Activated CD4-positive, alpha-beta memory T cell treated with anti-CD3 and anti-CD28 coated beads, Interleukin-2, amount 10 ng/mL, durations not matched to agents 7 days and 5 days (primary cell): ENCODE measurements at regions of chr17 and their contacts with region 1.

Region 1: GRCh38 chr17:80780381-80781198 is 211.1 kb upstream of the CHMP6 start:
- DNase-seq: peak; percentile 75
- H3K4me3 Mint-ChIP-seq: peak overlapping the region; percentile 54
- H3K27ac Mint-ChIP-seq: peak overlapping the region; percentile 95
- H3K4me1 Mint-ChIP-seq: peaks cover 83% of the 10 kb centered on the region
- H3K27me3 Mint-ChIP-seq: no peaks in the 10 kb centered on the region

Region 2: DNA sequence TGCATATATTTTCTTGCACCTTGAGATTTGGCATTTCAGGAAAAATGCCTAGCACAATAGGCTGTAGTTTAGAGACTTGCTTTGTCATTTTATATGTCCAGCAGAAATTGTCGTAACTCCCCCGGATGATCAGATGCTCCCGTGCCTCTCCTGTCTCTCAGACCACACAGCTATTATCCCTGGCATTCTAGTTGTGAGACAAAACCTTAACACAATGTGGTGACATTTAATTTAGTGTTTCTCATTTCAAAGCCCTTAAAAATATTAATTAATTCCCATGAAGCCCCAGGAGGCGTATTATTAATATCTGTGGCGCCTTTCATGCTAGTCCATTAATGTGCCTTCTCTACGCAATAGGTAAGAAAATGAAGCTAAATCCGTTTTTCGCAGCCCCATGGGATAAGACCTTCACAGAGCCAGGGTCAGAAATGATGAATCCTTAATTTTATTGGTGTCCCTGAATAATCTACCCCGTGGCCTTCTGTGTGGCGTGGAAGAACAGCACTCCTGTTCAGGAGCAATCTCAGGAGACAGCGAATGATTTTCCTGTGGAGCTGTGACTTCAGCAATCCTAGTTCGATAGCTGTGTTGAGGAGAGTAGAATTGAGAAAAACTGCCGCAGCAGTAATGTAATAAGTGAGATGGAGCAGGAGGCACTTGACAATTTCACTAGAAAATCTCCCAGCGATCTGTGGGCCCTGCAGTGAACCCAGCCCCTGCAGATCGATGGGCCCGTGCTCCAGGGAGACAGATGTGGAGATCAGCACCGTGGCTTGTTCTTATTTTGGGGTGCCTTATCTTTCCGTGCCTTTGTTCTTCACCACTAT is 78.1 kb before region 1 on chr17:
- CTCF ChIA-PET with region 1: no interaction called
- POLR2A ChIA-PET with region 1: no interaction called
- DNase-seq: no peak
- H3K4me3 Mint-ChIP-seq: no peak overlapping the region
- H3K27ac Mint-ChIP-seq: peak overlapping the region; percentile 86
- H3K4me1 Mint-ChIP-seq: peaks cover 69% of the 10 kb centered on the region
- H3K27me3 Mint-ChIP-seq: no peaks in the 10 kb centered on the region

Region 3: GRCh38 chr17:80737106-80738019 is 43.2 kb before region 1 on chr17:
- CTCF ChIA-PET with region 1: no interaction called
- POLR2A ChIA-PET with region 1: no interaction called
- DNase-seq: no peak
- H3K4me3 Mint-ChIP-seq: no peak overlapping the region
- H3K27ac Mint-ChIP-seq: no peak overlapping the region
- H3K4me1 Mint-ChIP-seq: peaks cover 21% of the 10 kb centered on the region
- H3K27me3 Mint-ChIP-seq: no peaks in the 10 kb centered on the region

Region 4: DNA sequence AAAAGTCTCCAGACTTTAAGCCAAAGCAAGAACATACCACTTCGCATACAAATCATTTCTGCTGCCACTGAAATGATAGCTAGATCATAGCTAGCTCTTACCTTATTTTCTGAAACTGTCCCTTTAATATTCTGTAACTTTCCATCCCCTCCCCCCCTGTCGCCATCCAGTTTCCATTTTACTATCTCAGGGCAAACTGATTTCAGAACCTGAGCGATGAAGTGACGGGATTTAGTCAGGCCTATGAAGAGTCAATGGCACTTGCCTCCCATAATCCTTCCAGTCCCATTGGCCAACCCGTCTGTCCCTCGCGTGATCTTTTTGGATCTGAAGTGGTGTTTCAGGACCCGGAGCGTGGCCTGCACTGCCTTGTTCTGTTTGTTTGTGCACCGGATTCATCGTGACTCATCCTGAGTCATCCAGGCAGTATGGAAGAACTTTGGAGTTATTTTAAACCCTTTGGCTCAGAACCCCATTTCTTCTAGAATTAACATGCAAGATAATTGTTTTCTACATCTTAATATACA is 11.2 kb after region 1 on chr17:
- CTCF ChIA-PET with region 1: interaction called, 7 read pairs
- POLR2A ChIA-PET with region 1: interaction called, 68 read pairs
- DNase-seq: peak; percentile 66
- H3K4me3 Mint-ChIP-seq: peak overlapping the region; percentile 74
- H3K27ac Mint-ChIP-seq: peak overlapping the region; percentile 97
- H3K4me1 Mint-ChIP-seq: peaks cover 80% of the 10 kb centered on the region
- H3K27me3 Mint-ChIP-seq: no peaks in the 10 kb centered on the region

Region 5: DNA sequence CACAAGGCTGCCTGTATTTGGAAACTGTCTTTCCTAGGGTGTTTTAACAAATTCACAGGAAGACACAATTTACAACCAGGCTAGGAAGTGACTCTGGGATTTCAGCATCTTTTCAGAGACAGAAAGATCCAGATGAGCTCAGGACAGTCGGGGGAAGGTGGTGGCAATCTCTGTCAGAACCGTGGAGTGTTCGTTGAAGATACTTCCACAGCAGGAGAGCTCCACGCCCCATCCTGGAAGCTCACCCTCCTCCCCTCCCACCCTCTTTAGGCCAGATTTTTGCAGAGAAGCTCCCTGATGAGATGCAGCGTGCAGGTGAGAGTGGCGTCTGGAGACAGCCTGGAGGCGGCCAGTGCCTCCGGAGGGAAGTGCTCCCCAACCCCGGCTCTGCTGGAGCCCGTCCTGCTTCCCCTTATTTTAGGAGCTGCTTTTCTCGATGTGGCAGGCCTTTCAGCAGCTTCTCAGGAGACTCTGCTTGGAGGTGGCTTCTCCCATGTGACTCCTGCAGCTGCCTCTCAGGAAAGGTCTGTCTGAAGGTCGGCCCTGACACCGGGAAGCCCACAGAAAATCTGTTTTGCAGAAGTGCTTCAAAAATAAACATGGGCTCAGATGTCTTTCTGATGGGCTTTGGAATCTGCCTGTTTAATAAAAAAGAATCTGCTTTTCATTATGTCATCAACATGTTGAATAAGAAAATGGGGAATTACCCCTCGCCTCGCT is 24.6 kb after region 1 on chr17:
- CTCF ChIA-PET with region 1: no interaction called
- POLR2A ChIA-PET with region 1: no interaction called
- DNase-seq: no peak
- H3K4me3 Mint-ChIP-seq: no peak overlapping the region
- H3K27ac Mint-ChIP-seq: no peak overlapping the region
- H3K4me1 Mint-ChIP-seq: peaks cover 25% of the 10 kb centered on the region
- H3K27me3 Mint-ChIP-seq: no peaks in the 10 kb centered on the region

Region 6: DNA sequence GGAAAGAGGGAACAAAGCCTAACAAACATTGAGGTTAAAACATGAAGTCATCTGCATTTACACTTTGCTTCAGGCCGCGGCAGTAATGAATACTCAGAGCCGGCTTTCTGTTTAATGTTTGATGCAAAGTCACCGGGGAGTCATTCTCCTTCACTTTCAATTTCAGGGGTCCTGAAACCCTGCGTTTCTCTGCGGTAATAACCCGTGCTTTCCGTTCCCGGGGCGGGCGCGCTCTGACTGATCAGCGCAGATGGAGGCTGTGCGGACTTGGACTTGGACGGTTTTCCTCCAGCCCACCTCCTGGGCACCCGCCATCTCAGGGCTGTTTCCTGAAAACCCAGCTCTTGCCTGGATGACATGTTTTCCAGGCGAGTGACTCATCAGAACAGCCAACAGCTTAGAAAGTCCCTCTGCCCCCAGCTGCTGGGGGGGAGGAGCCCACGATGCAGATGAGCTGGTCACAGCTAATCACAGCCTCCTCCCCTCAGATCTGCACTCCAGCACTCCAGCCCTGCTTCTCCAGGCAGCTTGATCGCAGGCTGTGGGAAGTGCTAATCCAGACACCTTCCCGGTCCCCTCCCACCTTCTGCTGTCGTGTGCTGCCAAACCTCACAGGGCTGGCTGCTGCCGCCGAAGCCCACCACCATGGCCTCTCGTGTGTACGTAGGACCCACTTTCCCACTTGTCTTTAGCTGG is 52.4 kb after region 1 on chr17:
- CTCF ChIA-PET with region 1: interaction called, 4 read pairs
- POLR2A ChIA-PET with region 1: interaction called, 10 read pairs
- DNase-seq: peak; percentile 84
- H3K4me3 Mint-ChIP-seq: peak overlapping the region; percentile 72
- H3K27ac Mint-ChIP-seq: peak overlapping the region; percentile 90
- H3K4me1 Mint-ChIP-seq: peaks cover 66% of the 10 kb centered on the region
- H3K27me3 Mint-ChIP-seq: no peaks in the 10 kb centered on the region

Region 7: GRCh38 chr17:80855948-80856862 is 75.6 kb after region 1 on chr17:
- CTCF ChIA-PET with region 1: no interaction called
- POLR2A ChIA-PET with region 1: interaction called, 26 read pairs
- DNase-seq: peak; percentile 94
- H3K4me3 Mint-ChIP-seq: peak overlapping the region; percentile 26
- H3K27ac Mint-ChIP-seq: peak overlapping the region; percentile 98
- H3K4me1 Mint-ChIP-seq: peaks cover 91% of the 10 kb centered on the region
- H3K27me3 Mint-ChIP-seq: no peaks in the 10 kb centered on the region

Region 8: GRCh38 chr17:80927791-80928216 is 147.2 kb after region 1 on chr17:
- CTCF ChIA-PET with region 1: no interaction called
- POLR2A ChIA-PET with region 1: no interaction called
- DNase-seq: no peak
- H3K4me3 Mint-ChIP-seq: no peak overlapping the region
- H3K27ac Mint-ChIP-seq: no peak overlapping the region
- H3K4me1 Mint-ChIP-seq: no peaks in the 10 kb centered on the region
- H3K27me3 Mint-ChIP-seq: no peaks in the 10 kb centered on the region